Heart left ventricle (tissue), 16 donors: ENCODE measurements at regions of chr6 and their contacts with region 1.

Region 1: DNA sequence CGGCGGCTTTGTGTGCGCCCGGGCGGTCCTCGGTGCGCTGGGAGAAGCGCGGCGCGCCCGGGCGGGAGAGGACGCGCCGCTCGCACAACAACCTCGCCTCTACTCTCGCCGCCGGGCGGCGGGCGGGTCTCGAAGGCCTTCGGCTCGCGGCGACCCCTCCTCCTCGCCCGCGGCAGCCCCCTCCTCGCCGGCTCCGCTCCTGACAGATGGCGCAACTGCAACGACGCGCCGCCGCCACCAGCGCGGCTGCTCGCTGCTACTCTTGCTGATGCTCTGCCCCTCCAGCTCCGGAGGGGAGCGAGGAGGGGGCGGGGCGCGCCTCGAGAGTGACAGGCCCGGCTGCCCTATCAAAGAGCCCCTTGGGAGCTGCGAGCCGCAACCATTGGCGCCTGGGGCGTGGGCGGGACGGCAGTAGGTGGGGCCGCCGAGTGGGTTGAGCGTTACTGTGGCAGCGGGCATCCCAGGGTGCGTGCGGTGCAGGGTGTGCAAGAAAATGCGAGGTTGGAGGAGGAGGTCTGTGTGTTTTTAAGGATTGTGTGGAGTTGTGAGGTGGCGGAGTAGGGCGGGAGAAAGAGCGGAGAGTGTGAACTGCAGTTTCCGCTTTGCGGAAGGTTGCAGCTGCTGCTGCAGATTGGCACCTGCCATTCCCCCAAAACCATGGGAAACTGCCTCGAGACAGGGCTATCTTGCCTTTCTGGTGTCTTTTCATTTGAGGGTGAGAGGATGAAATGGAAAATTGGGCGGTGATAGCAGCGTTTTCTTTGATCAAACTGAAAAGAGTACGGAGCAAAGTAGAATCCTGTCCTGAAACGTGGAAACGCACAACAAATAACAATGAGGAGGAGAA is at the start of gene FYN:
- DNase-seq: peak; percentile 98 to 99 (median 99)
- ATAC-seq: peak; percentile 99 to 100 (median 100)
- H3K4me3 ChIP-seq: peak within 1 kb of the TSS; percentile 62 to 90 (median 80)
- H3K27ac ChIP-seq: peak within 1 kb of the TSS; percentile 79 to 90 (median 84)
- H3K4me1 ChIP-seq: peaks cover 0 to 40% (median 26%) of the 10 kb centered on the region in 12 donors
- H3K27me3 ChIP-seq: no peaks in the 10 kb centered on the region
- CTCF ChIP-seq: peak in 11 of 12 donors; percentile 10 to 62 (median 46)
- POLR2A ChIP-seq: peak; percentile 76 to 97
- total RNA-seq, gene FYN: 28.1 to 72.4 (median 56.6) TPM

Region 2: DNA sequence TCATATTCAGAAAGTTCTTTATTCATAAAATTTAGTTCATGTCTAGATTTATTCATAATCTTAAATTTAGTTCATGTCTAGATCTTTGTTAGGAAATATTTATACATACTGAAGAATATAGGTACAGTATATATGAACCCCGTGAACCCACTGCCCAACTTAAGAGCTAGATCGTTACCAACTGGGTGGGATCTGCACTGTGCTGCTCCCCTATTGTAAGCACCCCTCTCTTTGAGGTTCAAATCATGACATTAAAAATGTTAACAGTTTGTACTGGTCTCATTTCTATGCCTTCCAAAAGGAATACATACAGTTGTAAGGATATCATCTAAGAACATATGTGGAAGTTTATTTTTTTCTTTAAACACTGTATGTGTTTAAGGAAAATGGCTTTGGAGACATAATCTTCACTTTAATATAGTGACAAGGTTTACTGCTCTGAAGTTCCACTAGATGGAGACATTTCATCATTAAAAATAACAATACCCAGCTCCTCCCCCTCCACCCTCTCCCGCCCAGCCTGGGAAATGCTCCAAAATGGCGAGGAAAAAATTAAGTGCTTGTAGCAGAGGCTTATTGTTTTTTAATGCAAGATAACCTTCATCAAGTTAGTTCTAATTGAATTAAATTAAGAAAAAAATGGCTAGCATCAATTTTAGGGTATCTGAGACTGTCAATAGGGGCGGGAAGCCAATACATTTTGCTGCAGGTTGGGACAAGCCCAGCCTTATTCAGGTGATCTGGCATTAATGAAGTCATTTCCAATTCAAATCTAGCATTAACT is 163.6 kb before region 1 on chr6:
- intact Hi-C with region 1: loop called in 9 of 10 experiments (anchors 1 to 10 kb)
- DNase-seq: peak; percentile 59 to 83 (median 66)
- ATAC-seq: peak; percentile 56 to 79 (median 75)
- H3K4me3 ChIP-seq: peak overlapping the region in 4 of 12 donors; percentile 13 to 29 (median 16)
- H3K27ac ChIP-seq: peak overlapping the region in 11 of 12 donors; percentile 22 to 66 (median 48)
- H3K4me1 ChIP-seq: peaks cover 3 to 45% (median 31%) of the 10 kb centered on the region in 12 donors
- H3K27me3 ChIP-seq: no peaks in the 10 kb centered on the region
- CTCF ChIP-seq: peak; percentile 66 to 88 (median 78)
- POLR2A ChIP-seq: no peak

Region 3: GRCh38 chr6:111743862-111744692 is 129.3 kb before region 1 on chr6:
- intact Hi-C with region 1: loop called in 2 of 10 experiments (anchors 10 kb)
- DNase-seq: peak in 4 of 5 donors; percentile 70 to 85 (median 80)
- ATAC-seq: peak; percentile 69 to 90 (median 87)
- H3K4me3 ChIP-seq: no peak overlapping the region
- H3K27ac ChIP-seq: peak overlapping the region; percentile 24 to 80 (median 68)
- H3K4me1 ChIP-seq: peaks cover 16 to 89% (median 65%) of the 10 kb centered on the region in 12 donors
- H3K27me3 ChIP-seq: no peaks in the 10 kb centered on the region
- CTCF ChIP-seq: no peak
- POLR2A ChIP-seq: no peak

Region 4: DNA sequence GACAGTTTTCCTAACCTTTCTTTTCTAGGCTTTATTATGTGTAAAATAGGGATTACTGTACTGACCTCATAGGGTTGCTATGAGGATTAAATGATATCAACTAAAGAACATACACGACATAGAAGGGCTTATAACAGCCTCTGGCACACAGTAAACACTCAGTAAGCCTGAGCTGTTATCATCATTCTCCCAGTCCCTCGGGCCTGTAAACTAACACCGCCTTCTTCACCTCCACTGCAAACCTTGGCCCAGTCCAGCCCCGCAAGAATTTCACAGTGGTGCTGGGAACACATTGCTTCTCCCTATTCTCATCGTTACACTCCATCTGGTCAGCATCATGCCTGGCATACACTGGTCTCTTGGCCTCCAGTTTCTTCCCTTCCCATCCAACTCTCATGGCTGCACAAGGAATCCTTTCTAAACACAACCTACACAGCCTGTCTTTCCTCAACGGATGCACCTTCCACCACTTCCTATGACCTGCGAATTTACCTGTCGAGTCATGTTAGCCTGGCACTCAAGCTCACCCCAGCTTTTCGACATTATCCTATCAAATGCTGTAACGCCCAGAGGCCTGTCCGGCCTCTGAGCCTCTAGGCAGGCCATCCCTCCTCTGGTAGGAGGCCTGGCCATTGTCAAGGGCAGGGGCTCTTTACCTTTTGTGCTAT is 92.2 kb before region 1 on chr6:
- intact Hi-C with region 1: loop called in 1 of 10 experiments (anchors 10 kb)
- DNase-seq: no peak
- ATAC-seq: peak; percentile 25 to 76 (median 50)
- H3K4me3 ChIP-seq: no peak overlapping the region
- H3K27ac ChIP-seq: peak overlapping the region in 8 of 12 donors; percentile 9 to 60 (median 44)
- H3K4me1 ChIP-seq: peaks cover 6 to 85% (median 63%) of the 10 kb centered on the region in 12 donors
- H3K27me3 ChIP-seq: no peaks in the 10 kb centered on the region
- CTCF ChIP-seq: no peak
- POLR2A ChIP-seq: no peak

Region 5: GRCh38 chr6:111824608-111825337 is 48.6 kb before region 1 on chr6:
- intact Hi-C with region 1: loop called in 2 of 10 experiments (anchors 5 kb)
- DNase-seq: no peak
- ATAC-seq: peak in 3 of 4 donors; percentile 55 to 63 (median 59)
- H3K4me3 ChIP-seq: no peak overlapping the region
- H3K27ac ChIP-seq: peak overlapping the region in 6 of 12 donors; percentile 28 to 68 (median 56)
- H3K4me1 ChIP-seq: peaks cover 0 to 48% (median 30%) of the 10 kb centered on the region in 12 donors
- H3K27me3 ChIP-seq: no peaks in the 10 kb centered on the region
- CTCF ChIP-seq: no peak
- POLR2A ChIP-seq: no peak

Region 6: DNA sequence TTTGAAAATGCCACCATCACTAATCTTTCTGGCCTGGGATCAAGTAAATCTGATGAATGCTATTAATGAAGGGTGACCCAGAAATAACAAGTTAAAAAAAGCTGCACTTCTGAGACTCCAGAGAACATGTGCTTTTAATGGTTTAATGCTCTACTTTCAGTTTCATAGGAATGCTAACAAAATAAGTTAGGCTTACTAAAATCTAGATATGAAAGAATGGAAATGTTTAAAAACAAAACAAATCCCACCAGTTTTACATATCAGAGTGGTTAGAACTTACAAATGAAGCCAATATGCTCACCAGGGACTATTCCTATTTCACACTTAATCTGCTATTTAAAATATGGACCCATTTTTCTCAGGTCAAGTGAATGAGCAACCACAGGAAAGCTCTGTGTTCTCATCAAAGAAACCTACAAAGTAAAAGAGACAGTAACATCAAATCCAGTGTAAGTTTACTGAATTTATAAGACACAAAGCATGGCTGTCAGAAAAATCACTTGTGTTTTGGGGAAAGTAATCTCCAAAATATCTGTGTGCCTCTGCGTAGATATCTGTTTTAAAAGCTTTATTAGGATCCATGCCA is 40.5 kb before region 1 on chr6:
- intact Hi-C with region 1: loop called in 3 of 10 experiments (anchors 5 kb)
- DNase-seq: no peak
- ATAC-seq: no peak
- H3K4me3 ChIP-seq: peak overlapping the region in 2 of 12 donors; percentile 4 to 7
- H3K27ac ChIP-seq: peak overlapping the region in 6 of 12 donors; percentile 1 to 59 (median 18)
- H3K4me1 ChIP-seq: peaks cover 0 to 63% (median 46%) of the 10 kb centered on the region in 12 donors
- H3K27me3 ChIP-seq: no peaks in the 10 kb centered on the region
- CTCF ChIP-seq: no peak
- POLR2A ChIP-seq: no peak

Region 7: GRCh38 chr6:111997078-111997852 is 123.9 kb after region 1 on chr6:
- intact Hi-C with region 1: loop called in 7 of 10 experiments (anchors 2 to 10 kb)
- DNase-seq: peak; percentile 80 to 91 (median 85)
- ATAC-seq: peak; percentile 70 to 94 (median 92)
- H3K4me3 ChIP-seq: peak overlapping the region in 10 of 12 donors; percentile 1 to 42 (median 23)
- H3K27ac ChIP-seq: peak overlapping the region in 7 of 12 donors; percentile 22 to 57 (median 45)
- H3K4me1 ChIP-seq: peaks cover 0 to 12% (median 4%) of the 10 kb centered on the region in 12 donors
- H3K27me3 ChIP-seq: no peaks in the 10 kb centered on the region
- CTCF ChIP-seq: peak; percentile 81 to 94 (median 91)
- POLR2A ChIP-seq: no peak